ENCODE measurements at regions of chr14 and their contacts with region 1.

Region 1: DNA sequence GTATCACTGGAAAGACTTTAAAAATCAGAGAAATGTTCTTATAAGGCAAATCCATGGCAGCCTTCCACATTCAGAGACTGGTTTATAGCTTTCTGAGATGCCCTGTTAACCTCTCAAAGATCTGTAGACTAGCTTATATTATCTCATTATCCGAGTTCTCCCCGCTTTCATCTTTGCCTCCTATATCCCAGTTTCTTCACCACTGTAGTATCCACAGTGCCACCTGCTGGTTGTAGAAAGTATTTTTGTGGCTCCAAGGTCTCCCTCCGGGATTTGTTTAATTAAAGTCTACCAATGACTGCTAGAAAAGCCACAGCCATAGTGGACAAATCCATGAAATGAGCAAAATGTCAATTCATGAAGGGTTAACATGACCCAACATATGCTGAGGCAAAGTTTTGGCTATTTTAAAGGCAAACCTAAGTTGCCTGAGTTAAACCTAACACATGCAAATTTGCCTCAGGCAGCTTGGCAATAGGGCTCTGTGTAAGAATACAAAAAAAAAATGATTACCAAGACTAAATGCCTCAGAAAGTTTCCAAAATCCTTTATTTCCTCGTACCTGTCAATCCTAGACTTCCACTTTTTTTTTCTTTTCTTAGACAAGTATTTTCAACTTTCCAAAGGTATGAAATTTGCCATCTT is 218.8 kb upstream of the BMP4 start:
- DNase-seq: peak; percentile 23 to 86
- H3K4me3 ChIP-seq: no peak overlapping the region
- H3K27ac ChIP-seq: no peak overlapping the region
- H3K4me1 ChIP-seq: no peaks in the 10 kb centered on the region
- H3K27me3 ChIP-seq: no peaks in the 10 kb centered on the region
- CTCF ChIP-seq: peak in 2 of 3 experiments; percentile 70 to 74; a peak in 3 of 4 replicates
- EP300 ChIP-seq: no peak
- POLR2A ChIP-seq: no peak
- RAD21 ChIP-seq: peak; percentile 86 to 92

Region 2: GRCh38 chr14:53470351-53471043 is 704.9 kb before region 1 on chr14:
- CTCF ChIA-PET with region 1: no interaction called
- POLR2A ChIA-PET with region 1: no interaction called
- DNase-seq: no peak
- H3K4me3 ChIP-seq: no peak overlapping the region
- H3K27ac ChIP-seq: no peak overlapping the region
- H3K4me1 ChIP-seq: no peaks in the 10 kb centered on the region
- H3K27me3 ChIP-seq: no peaks in the 10 kb centered on the region
- CTCF ChIP-seq: no peak
- EP300 ChIP-seq: no peak
- POLR2A ChIP-seq: no peak
- RAD21 ChIP-seq: no peak

Region 3: DNA sequence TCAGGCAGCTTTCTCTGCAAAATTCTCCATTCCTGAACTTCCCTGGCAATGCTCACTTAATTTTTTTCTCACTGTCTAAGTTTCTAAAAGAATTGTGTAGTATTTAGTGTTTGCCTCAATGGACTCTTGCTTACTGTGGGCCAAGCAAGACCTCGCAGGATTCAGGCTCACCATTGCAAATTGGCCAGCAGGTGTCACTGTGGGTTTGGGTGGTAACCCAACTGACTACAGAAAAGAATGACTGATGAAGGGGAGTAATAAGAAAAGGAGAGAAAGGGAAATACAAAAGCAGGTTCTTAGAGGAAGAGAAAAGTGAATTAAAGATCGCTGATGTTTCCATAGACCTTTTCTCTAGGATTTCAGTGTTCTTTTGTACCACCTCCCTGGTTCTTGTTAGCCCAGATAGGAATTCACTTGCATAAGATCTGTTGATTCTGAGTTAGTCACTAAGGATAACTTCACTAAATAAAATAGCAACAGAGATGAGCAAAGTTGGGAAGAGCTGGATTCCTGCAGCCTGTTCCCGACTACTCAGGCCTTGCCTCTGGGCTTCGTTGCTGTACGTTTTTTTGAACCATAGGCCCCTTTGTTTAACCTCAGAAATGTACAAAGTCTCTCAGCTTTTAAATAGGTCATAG is 635.8 kb before region 1 on chr14:
- CTCF ChIA-PET with region 1: interaction called, 13 read pairs
- POLR2A ChIA-PET with region 1: no interaction called
- DNase-seq: peak; percentile 70 to 91
- H3K4me3 ChIP-seq: no peak overlapping the region
- H3K27ac ChIP-seq: no peak overlapping the region
- H3K4me1 ChIP-seq: no peaks in the 10 kb centered on the region
- H3K27me3 ChIP-seq: no peaks in the 10 kb centered on the region
- CTCF ChIP-seq: peak; percentile 75 to 83 (median 82)
- EP300 ChIP-seq: no peak
- POLR2A ChIP-seq: no peak
- RAD21 ChIP-seq: peak; percentile 96 to 97

Region 4: DNA sequence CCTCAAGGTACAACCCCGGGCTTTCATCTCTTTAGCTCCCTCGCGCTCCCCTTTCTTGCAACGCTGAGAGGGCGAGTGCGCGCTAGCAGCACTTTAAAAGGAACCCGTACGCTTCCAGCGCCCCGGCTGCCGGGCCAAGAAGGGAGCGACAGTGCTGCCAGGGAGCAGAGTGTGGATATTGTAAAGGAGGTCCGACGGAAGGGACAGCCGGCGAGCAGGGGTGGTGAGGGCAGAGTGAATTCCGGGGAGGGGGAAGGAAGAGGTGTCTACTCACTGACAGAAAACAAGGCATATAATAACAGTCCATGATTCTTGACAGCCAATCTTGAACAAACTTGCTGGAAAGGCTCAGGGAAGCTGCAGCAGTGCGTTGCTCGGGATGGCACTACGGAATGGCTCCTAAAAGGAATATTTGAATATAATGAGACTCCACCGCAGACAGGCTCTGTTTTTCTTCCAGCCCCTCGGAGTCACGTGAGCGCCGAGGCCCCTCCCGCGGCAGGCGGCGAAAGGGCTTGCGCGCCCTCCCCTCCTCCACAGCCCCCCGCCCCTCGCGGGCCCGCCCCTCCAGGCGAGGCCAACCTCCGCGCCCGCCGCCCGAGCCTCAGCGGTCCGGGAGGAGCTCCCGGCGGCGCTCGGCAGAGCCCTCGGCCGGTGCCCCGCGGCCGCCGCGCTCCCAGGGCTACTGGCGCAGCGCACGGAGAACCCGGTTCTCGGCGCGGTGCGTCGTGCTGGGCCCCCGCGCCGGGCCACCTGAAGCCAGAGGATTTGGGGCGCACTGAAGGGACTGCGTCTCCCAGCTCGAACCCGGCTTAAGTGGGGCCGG is 222.2 kb before region 1 on chr14:
- CTCF ChIA-PET with region 1: interaction called, 18 read pairs
- POLR2A ChIA-PET with region 1: no interaction called
- DNase-seq: peak in 1 of 2 experiments; percentile 86
- H3K4me3 ChIP-seq: peak overlapping the region; percentile 54 to 86 (median 78)
- H3K27ac ChIP-seq: no peak overlapping the region
- H3K4me1 ChIP-seq: peaks cover 5 to 9% (median 7%) of the 10 kb centered on the region in 4 experiments
- H3K27me3 ChIP-seq: peaks cover 26 to 78% (median 67%) of the 10 kb centered on the region in 4 experiments
- CTCF ChIP-seq: no peak
- EP300 ChIP-seq: no peak
- POLR2A ChIP-seq: no peak
- RAD21 ChIP-seq: no peak; a peak in 1 of 4 replicates

Region 5: GRCh38 chr14:54189748-54190354 is 14.4 kb after region 1 on chr14:
- CTCF ChIA-PET with region 1: interaction called, 47 read pairs
- POLR2A ChIA-PET with region 1: no interaction called
- DNase-seq: no peak
- H3K4me3 ChIP-seq: no peak overlapping the region
- H3K27ac ChIP-seq: no peak overlapping the region
- H3K4me1 ChIP-seq: no peaks in the 10 kb centered on the region
- H3K27me3 ChIP-seq: no peaks in the 10 kb centered on the region
- CTCF ChIP-seq: no peak
- EP300 ChIP-seq: no peak
- POLR2A ChIP-seq: no peak
- RAD21 ChIP-seq: no peak

Region 6: GRCh38 chr14:54338696-54339317 is 163.4 kb after region 1 on chr14:
- CTCF ChIA-PET with region 1: interaction called, 15 read pairs
- POLR2A ChIA-PET with region 1: no interaction called
- DNase-seq: no peak
- H3K4me3 ChIP-seq: no peak overlapping the region
- H3K27ac ChIP-seq: no peak overlapping the region
- H3K4me1 ChIP-seq: peaks cover 0 to 7% (median 1%) of the 10 kb centered on the region in 4 experiments; a peak in 3 of 7 replicates
- H3K27me3 ChIP-seq: no peaks in the 10 kb centered on the region
- CTCF ChIP-seq: peak in 2 of 3 experiments; percentile 64 to 67; a peak in 3 of 4 replicates
- EP300 ChIP-seq: no peak
- POLR2A ChIP-seq: no peak
- RAD21 ChIP-seq: peak; percentile 83 to 89